ENCODE measurements at regions of chr1 and their contacts with region 1.

Region 1: DNA sequence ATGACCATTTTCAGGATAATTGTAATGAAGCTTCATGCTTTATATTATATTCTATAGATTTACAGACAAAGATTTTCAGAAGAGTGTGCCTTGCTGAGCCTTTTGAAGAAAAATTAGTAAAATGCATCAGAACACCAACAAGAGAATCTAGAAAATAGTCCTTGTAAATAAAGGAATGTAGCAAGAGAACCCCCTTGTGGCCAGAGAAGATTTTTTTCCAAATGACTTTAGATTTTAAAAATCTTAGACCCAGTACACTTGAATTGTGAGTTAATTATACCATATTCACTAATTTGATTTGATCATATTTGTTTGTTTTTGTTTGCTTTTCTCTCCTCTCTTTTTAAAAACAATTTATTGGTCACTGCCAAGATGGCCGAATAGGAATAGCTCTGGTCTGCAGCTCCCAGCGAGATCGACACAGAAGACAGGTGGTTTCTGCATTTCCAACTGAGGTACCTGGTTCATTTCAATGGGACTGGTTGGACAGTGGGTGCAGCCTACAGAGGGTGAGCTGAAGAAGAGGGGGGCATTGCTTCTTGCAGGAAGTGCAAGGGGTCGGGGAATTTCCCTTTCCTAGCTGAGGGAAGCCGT is 12.8 kb upstream of the IFI44L start:
- H3K4me3 Mint-ChIP-seq: no peak overlapping the region
- H3K27ac Mint-ChIP-seq: no peak overlapping the region
- H3K4me1 Mint-ChIP-seq: no peaks in the 10 kb centered on the region
- H3K27me3 Mint-ChIP-seq: no peaks in the 10 kb centered on the region

Region 2: DNA sequence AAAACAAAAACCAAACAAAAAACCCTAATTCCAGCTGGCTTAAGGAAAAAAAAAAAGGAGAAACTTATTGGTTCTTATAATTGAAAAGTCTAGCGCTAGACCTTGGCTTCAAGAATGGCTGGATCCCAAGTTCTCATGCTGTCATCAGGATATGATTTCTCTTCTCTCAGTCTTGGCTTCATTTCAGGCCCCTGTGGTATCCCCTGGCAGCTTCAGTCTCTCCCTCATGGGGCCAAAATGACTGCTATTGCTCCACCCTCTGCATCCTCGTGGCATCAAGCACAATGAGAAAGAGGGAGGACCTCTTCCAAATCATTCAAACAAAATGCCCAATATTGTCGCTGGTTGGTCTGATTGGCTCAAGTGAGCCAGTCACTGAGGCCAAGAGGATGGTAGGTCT is 480.9 kb before region 1 on chr1:
- intact Hi-C with region 1: loop called (anchors 1 kb)
- H3K4me3 Mint-ChIP-seq: no peak overlapping the region
- H3K27ac Mint-ChIP-seq: no peak overlapping the region
- H3K4me1 Mint-ChIP-seq: no peaks in the 10 kb centered on the region
- H3K27me3 Mint-ChIP-seq: no peaks in the 10 kb centered on the region

Region 3: GRCh38 chr1:78333502-78333901 is 273.9 kb before region 1 on chr1:
- intact Hi-C with region 1: no loop called
- H3K4me3 Mint-ChIP-seq: no peak overlapping the region
- H3K27ac Mint-ChIP-seq: no peak overlapping the region
- H3K4me1 Mint-ChIP-seq: no peaks in the 10 kb centered on the region
- H3K27me3 Mint-ChIP-seq: peaks cover 3% of the 10 kb centered on the region

Region 4: GRCh38 chr1:78622548-78622947 is 15.1 kb after region 1 on chr1:
- intact Hi-C with region 1: no loop called
- H3K4me3 Mint-ChIP-seq: no peak overlapping the region
- H3K27ac Mint-ChIP-seq: no peak overlapping the region
- H3K4me1 Mint-ChIP-seq: peaks cover 27% of the 10 kb centered on the region
- H3K27me3 Mint-ChIP-seq: no peaks in the 10 kb centered on the region

Measured in dendritic cell treated with granulocyte-macrophage colony-stimulating factor and Interleukin-4, amounts not matched to agents 40 ng/mL and 50 ng/mL, for 4 days (primary cell).